ENCODE measurements at regions of chr3 and their contacts with region 1.

Region 1: GRCh38 chr3:156071031-156071430 is 49.3 kb upstream of the KCNAB1 start:
- DNase-seq: no peak

Region 2: DNA sequence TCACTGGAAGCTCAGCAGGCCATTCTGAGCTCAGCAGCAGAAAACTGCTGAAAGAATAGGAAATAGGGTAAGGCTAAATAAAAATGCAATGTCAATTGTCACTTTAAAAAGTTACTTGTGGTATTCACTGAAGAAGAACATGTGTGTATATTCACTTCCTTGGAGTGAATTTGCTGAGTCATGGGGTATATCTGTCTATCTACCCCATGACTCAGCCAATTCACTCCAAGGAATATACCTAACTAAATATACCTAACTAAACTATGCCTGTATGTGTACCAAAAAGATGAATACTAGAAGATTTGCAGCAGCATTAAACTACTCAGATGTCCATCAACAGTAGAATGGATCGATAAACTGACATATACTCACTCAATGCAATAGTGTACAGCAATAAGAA is 20.1 kb before region 1 on chr3:
- intact Hi-C with region 1: loop called in 1 of 2 experiments (anchors 2 kb)
- DNase-seq: no peak

Measured in posterior vena cava (tissue), 2 donors.